ENCODE measurements at regions of chr4 and their contacts with region 1.

Region 1: DNA sequence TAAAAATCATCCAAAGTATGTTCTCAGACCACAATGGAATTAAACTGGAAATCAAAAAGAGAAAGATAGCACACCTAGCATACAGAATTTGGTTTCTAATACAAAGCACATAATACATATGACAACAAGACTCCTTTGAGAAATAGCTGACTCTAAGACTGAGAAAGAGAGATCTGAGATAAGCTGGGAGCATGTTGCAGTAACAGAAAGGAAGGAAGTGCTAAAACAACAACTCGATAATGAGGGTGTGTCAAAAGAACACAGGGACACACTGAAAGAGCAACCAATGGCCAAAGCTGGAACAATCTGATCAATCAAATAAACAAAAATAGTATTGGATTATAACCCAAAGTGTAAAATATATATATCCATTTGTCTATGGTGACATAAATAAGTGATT is 586.6 kb downstream of the C4orf33 start:
- DNase-seq: no peak
- H3K4me3 ChIP-seq: no peak overlapping the region
- H3K27ac ChIP-seq: no peak overlapping the region
- H3K4me1 ChIP-seq: no peaks in the 10 kb centered on the region
- H3K27me3 ChIP-seq: no peaks in the 10 kb centered on the region
- CTCF ChIP-seq: no peak
- POLR2A ChIP-seq: no peak

Region 2: GRCh38 chr4:129707949-129708348 is 25.4 kb after region 1 on chr4:
- intact Hi-C with region 1: loop called (anchors 2 kb)
- DNase-seq: no peak
- H3K4me3 ChIP-seq: no peak overlapping the region
- H3K27ac ChIP-seq: no peak overlapping the region
- H3K4me1 ChIP-seq: no peaks in the 10 kb centered on the region
- H3K27me3 ChIP-seq: no peaks in the 10 kb centered on the region
- CTCF ChIP-seq: no peak
- POLR2A ChIP-seq: no peak

Measured in breast epithelium (tissue), 4 donors.